Esophagus squamous epithelium (tissue), 5 donors: ENCODE measurements at regions of chr4 and their contacts with region 1.

Region 1: GRCh38 chr4:111274486-111274885 is 651.6 kb upstream of the PITX2 start:
- DNase-seq: no peak
- H3K4me3 ChIP-seq: no peak overlapping the region
- H3K27ac ChIP-seq: no peak overlapping the region
- H3K4me1 ChIP-seq: no peaks in the 10 kb centered on the region
- H3K27me3 ChIP-seq: no peaks in the 10 kb centered on the region
- CTCF ChIP-seq: no peak
- POLR2A ChIP-seq: no peak

Region 2: GRCh38 chr4:110631584-110632505 is 642.6 kb before region 1 on chr4:
- intact Hi-C with region 1: loop called (anchors 10 kb)
- DNase-seq: no peak
- H3K4me3 ChIP-seq: peak overlapping the region; percentile 13 to 57 (median 38)
- H3K27ac ChIP-seq: no peak overlapping the region
- H3K4me1 ChIP-seq: peaks cover 9 to 51% (median 15%) of the 10 kb centered on the region in 3 donors
- H3K27me3 ChIP-seq: peaks cover 23 to 100% (median 42%) of the 10 kb centered on the region in 4 donors
- CTCF ChIP-seq: peak in 5 of 6 experiments; percentile 67 to 86 (median 71)
- POLR2A ChIP-seq: no peak

Region 3: GRCh38 chr4:111187103-111187502 is 87.4 kb before region 1 on chr4:
- intact Hi-C with region 1: no loop called
- DNase-seq: no peak
- H3K4me3 ChIP-seq: no peak overlapping the region
- H3K27ac ChIP-seq: no peak overlapping the region
- H3K4me1 ChIP-seq: no peaks in the 10 kb centered on the region
- H3K27me3 ChIP-seq: no peaks in the 10 kb centered on the region
- CTCF ChIP-seq: no peak
- POLR2A ChIP-seq: no peak

Region 4: GRCh38 chr4:111362941-111363361 is 88.5 kb after region 1 on chr4:
- intact Hi-C with region 1: no loop called
- DNase-seq: no peak
- H3K4me3 ChIP-seq: no peak overlapping the region
- H3K27ac ChIP-seq: no peak overlapping the region
- H3K4me1 ChIP-seq: no peaks in the 10 kb centered on the region
- H3K27me3 ChIP-seq: no peaks in the 10 kb centered on the region
- CTCF ChIP-seq: no peak
- POLR2A ChIP-seq: no peak